Activated T-helper 2 cell treated with anti-CD3 and anti-CD28 coated beads, Interferon-gamma antibody, Interleukin-2, Interleukin-4, amounts not matched to agents 10 μg/mL and 5 μg/mL and 100 μg/mL, durations not matched to agents 14 hours and 24 hours and 36 hours (primary cell): ENCODE measurements at regions of chr3 and their contacts with region 1.

Region 1: DNA sequence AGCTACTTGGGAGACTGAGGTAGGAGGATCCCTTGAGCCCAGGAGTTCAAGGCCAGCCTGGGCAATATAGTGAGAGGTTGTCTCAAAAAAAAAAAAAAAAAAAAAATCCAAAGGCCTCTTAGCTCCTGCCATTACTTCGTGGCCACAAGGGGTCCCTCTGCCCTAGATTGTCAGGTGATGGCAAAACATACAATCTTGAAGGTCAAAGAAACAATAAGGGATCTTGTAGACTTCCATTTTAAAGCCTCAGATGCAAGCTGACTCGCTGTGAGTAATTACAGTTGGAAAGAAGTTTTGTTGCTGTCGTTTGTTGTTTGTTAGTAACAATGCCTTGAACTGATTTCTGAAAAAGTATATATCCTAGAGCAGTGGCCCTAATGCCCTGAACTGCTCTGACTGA is 55.9 kb upstream of the PLCL2 start:
- DNase-seq: peak; percentile 28
- H3K4me3 Mint-ChIP-seq: no peak overlapping the region
- H3K27ac Mint-ChIP-seq: no peak overlapping the region
- H3K4me1 Mint-ChIP-seq: peaks cover 18% of the 10 kb centered on the region
- H3K27me3 Mint-ChIP-seq: peaks cover 30% of the 10 kb centered on the region

Region 2: DNA sequence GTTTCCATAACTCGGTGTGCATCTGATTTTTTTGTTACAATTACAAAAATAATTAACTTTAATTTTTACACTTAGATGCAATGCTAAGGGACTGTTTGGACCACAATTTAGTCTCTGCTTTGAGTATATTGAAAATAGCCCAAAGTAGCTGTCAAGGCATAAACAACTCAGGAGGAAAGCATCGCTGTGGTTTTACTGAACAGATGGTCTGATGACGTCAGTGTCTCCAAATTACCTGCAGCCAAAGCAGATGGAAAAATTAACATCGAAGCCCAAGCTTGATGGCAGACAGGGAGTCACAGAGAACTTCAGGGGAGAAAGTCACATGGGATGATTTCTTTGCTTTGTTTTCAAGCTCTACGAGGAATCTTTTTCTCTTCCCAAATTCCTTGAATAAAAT is 27.1 kb before region 1 on chr3:
- intact Hi-C with region 1: loop called (anchors 1 kb)
- DNase-seq: no peak
- H3K4me3 Mint-ChIP-seq: no peak overlapping the region
- H3K27ac Mint-ChIP-seq: no peak overlapping the region
- H3K4me1 Mint-ChIP-seq: peaks cover 31% of the 10 kb centered on the region
- H3K27me3 Mint-ChIP-seq: peaks cover 21% of the 10 kb centered on the region

Region 3: DNA sequence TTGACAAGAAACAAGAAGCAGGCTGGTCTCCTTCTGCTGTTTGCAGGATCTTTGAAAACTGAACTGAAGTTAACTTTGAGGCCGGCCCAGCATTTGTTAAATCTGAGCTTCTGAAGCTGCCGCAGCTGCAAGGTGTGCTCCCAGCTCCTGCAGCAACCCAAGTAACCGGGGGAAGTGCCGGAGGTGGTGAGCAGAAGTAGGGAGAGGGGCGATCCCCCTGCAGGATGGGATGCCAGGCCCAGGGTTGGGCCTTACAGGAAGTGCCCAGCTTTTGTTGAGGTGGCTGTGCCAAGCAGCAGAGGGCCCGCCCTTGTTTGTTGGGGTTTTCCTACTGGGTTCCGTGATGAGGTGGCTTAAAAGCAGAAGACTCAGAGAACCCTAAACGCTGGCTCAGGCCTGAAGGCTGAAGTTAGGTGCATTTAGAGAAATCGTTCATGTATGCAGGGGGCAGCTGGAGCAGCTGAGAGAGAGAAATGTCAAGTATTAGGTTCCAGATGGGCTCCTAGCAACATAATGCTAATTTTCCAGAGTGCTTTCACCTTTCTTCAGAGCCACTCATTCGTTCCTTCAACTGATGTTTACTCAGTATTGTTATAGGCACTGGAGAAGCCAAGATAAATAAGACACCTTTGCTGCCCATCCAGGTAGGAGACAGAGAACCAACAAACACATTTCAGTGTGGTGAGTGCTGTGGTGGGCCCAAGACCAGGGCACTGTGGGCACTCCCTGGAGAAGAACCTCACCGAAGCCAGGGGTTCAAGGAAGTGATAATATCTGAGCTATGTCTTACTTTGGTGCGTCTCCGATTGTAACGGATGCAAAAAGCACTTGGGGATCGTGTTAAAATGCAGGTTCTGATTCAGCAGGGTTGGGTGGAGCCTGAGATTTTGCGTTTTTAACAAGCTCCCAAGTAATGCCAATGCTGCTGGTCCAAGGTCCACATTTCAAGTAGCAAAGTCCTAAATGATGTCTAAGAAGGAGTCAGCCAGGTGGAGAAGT is 13.8 kb after region 1 on chr3:
- intact Hi-C with region 1: loop called (anchors 2 kb)
- DNase-seq: peak; percentile 71
- H3K4me3 Mint-ChIP-seq: peak overlapping the region; percentile 75
- H3K27ac Mint-ChIP-seq: peak overlapping the region; percentile 94
- H3K4me1 Mint-ChIP-seq: peaks cover 60% of the 10 kb centered on the region
- H3K27me3 Mint-ChIP-seq: peaks cover 4% of the 10 kb centered on the region

Region 4: DNA sequence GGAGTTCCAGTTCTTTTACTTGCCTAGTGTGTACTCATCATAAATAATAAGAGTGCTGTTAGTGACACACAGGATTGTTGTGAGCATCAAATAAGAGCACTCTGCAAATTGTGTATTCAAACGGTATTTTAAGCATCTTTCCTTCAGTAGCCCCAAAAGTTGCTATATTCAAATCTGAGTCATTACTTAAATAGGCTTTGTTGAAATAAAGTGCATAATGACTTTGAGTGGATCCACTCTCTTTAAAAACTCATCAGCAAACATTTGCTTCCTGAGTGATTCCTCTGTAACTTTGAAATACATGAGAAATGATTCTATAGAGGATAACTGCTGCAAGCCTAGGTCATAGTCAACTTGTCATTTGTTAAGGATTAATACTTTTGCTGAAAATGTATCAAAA is 26.7 kb after region 1 on chr3:
- intact Hi-C with region 1: no loop called
- DNase-seq: no peak
- H3K4me3 Mint-ChIP-seq: no peak overlapping the region
- H3K27ac Mint-ChIP-seq: no peak overlapping the region
- H3K4me1 Mint-ChIP-seq: peaks cover 7% of the 10 kb centered on the region
- H3K27me3 Mint-ChIP-seq: peaks cover 30% of the 10 kb centered on the region

Region 5: DNA sequence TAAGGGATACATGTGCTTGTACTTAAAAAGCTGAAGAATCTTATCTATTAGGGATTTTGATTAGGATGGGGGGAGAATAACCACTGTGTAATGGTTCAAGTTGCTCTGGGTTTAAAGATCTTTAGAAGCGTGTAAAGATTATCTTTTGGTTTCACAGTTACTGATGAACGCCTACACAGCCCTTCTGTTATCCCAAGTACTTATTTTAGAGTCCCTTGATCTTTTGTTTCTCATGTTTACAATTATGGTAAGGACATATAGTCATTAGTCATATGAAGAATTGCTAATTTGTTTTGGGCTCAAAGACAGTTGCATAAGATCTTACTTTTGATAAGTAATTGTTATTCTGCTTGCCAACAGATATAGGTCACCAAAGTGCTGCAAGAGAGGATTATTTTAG is 216.0 kb after region 1 on chr3:
- intact Hi-C with region 1: loop called (anchors 10 kb)
- DNase-seq: no peak
- H3K4me3 Mint-ChIP-seq: no peak overlapping the region
- H3K27ac Mint-ChIP-seq: peak overlapping the region; percentile 20
- H3K4me1 Mint-ChIP-seq: peaks cover 54% of the 10 kb centered on the region
- H3K27me3 Mint-ChIP-seq: no peaks in the 10 kb centered on the region

Region 6: GRCh38 chr3:17233398-17233800 is 404.6 kb after region 1 on chr3:
- intact Hi-C with region 1: loop called (anchors 2 kb)
- DNase-seq: peak; percentile 27
- H3K4me3 Mint-ChIP-seq: no peak overlapping the region
- H3K27ac Mint-ChIP-seq: no peak overlapping the region
- H3K4me1 Mint-ChIP-seq: peaks cover 18% of the 10 kb centered on the region
- H3K27me3 Mint-ChIP-seq: no peaks in the 10 kb centered on the region